CD4-positive, alpha-beta memory T cell (primary cell): ENCODE measurements at regions of chr2 and their contacts with region 1.

Region 1: GRCh38 chr2:96145036-96145847 is at the start of gene DUSP2:
- DNase-seq: peak; percentile 86 to 92 (median 87)
- H3K4me3 ChIP-seq: peak within 1 kb of the TSS; percentile 71 to 86
- H3K4me3 Mint-ChIP-seq: peak within 1 kb of the TSS; percentile 93 to 96 (median 94)
- H3K27ac ChIP-seq: peak within 1 kb of the TSS; percentile 100
- H3K27ac Mint-ChIP-seq: peak within 1 kb of the TSS; percentile 98 to 100 (median 99)
- H3K4me1 ChIP-seq: peaks cover 62% of the 10 kb centered on the region
- H3K4me1 Mint-ChIP-seq: peaks cover 33 to 79% (median 57%) of the 10 kb centered on the region in 4 donors
- H3K27me3 ChIP-seq: no peaks in the 10 kb centered on the region
- H3K27me3 Mint-ChIP-seq: no peaks in the 10 kb centered on the region
- total RNA-seq, gene DUSP2: 33.4 to 34.6 TPM

Region 2: GRCh38 chr2:96157651-96158553 is 12.7 kb after region 1 on chr2:
- CTCF ChIA-PET with region 1: interaction called, 43 read pairs
- POLR2A ChIA-PET with region 1: interaction called, 285 read pairs
- intact Hi-C with region 1: no loop called
- DNase-seq: peak; percentile 48 to 84 (median 58)
- H3K4me3 ChIP-seq: peak overlapping the region; percentile 4 to 9
- H3K4me3 Mint-ChIP-seq: peak overlapping the region; percentile 21 to 91 (median 68)
- H3K27ac ChIP-seq: peak overlapping the region; percentile 38
- H3K27ac Mint-ChIP-seq: peak overlapping the region; percentile 77 to 94 (median 88)
- H3K4me1 ChIP-seq: peaks cover 58% of the 10 kb centered on the region
- H3K4me1 Mint-ChIP-seq: peaks cover 42 to 78% (median 58%) of the 10 kb centered on the region in 4 donors
- H3K27me3 ChIP-seq: no peaks in the 10 kb centered on the region
- H3K27me3 Mint-ChIP-seq: no peaks in the 10 kb centered on the region

Region 3: GRCh38 chr2:96164459-96165184 is 19.4 kb after region 1 on chr2:
- CTCF ChIA-PET with region 1: interaction called, 648 read pairs
- POLR2A ChIA-PET with region 1: interaction called, 285 read pairs
- intact Hi-C with region 1: loop called (anchors 1 kb)
- DNase-seq: peak; percentile 57 to 74 (median 61)
- H3K4me3 ChIP-seq: peak overlapping the region; percentile 20 to 36
- H3K4me3 Mint-ChIP-seq: peak overlapping the region; percentile 48 to 86 (median 70)
- H3K27ac ChIP-seq: peak overlapping the region; percentile 58
- H3K27ac Mint-ChIP-seq: peak overlapping the region; percentile 93 to 98 (median 95)
- H3K4me1 ChIP-seq: peaks cover 42% of the 10 kb centered on the region
- H3K4me1 Mint-ChIP-seq: peaks cover 30 to 55% (median 43%) of the 10 kb centered on the region in 4 donors
- H3K27me3 ChIP-seq: no peaks in the 10 kb centered on the region
- H3K27me3 Mint-ChIP-seq: no peaks in the 10 kb centered on the region

Region 4: DNA sequence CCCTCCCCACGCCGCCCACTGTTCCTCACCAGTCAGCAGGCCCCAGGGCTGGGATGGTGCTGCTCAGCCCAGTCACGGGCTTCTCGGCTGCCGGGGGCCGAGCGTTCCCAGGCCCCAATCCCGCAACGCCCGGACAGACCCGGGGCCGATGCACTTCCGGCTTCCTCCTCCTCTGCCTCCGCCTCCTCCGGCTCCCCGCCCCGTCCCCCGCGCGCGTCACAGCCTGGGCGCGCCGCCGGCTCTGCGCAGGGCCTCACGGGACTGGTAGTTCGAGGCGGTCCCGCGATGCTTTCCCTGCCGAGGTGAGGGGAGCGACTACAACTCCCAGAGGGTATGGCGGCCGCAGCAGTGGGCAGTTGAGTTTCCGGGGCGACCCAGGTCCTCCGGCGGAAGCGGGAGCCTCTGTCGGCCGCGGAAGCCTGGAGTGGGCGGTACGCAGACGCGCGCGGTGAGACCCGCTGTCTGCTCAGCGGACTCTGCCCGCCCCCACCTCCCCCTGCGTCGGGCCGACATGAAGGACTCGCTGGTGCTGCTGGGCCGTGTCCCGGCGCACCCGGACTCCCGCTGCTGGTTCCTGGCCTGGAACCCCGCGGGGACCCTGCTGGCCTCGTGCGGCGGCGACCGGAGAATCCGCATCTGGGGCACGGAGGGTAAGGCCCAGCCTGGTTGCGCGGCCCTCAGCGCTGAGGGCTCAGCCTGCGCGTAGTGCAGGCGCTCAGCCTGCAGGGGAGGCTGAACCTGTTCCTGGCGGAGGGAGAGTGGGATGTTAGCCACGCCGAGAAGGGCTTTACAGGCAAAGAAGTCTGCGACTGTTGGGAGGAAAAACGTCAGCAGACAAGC is 120.8 kb after region 1 on chr2 and contains the starts of genes CIAO1 and TMEM127:
- CTCF ChIA-PET with region 1: interaction called, 4 read pairs
- POLR2A ChIA-PET with region 1: interaction called, 3 read pairs
- intact Hi-C with region 1: loop called (anchors 1 kb)
- DNase-seq: peak; percentile 97 to 98 (median 97)
- H3K4me3 ChIP-seq: peak within 1 kb of the TSS; percentile 85 to 97
- H3K4me3 Mint-ChIP-seq: peak within 1 kb of the TSS; percentile 91 to 99 (median 94)
- H3K27ac ChIP-seq: peak within 1 kb of the TSS; percentile 94
- H3K27ac Mint-ChIP-seq: peak within 1 kb of the TSS; percentile 80 to 99 (median 94)
- H3K4me1 ChIP-seq: peaks cover 49% of the 10 kb centered on the region
- H3K4me1 Mint-ChIP-seq: peaks cover 22 to 64% (median 48%) of the 10 kb centered on the region in 4 donors
- H3K27me3 ChIP-seq: no peaks in the 10 kb centered on the region
- H3K27me3 Mint-ChIP-seq: no peaks in the 10 kb centered on the region
- total RNA-seq, gene CIAO1: 78.3 to 87.3 TPM
- total RNA-seq, gene TMEM127: 45.1 to 45.6 TPM

Region 5: GRCh38 chr2:96276787-96277499 is 131.7 kb after region 1 on chr2:
- CTCF ChIA-PET with region 1: no interaction called
- POLR2A ChIA-PET with region 1: no interaction called
- intact Hi-C with region 1: no loop called
- DNase-seq: no peak
- H3K4me3 ChIP-seq: no peak overlapping the region
- H3K4me3 Mint-ChIP-seq: no peak overlapping the region
- H3K27ac ChIP-seq: no peak overlapping the region
- H3K27ac Mint-ChIP-seq: peak overlapping the region in 2 of 7 donors; percentile 22 to 29
- H3K4me1 ChIP-seq: no peaks in the 10 kb centered on the region
- H3K4me1 Mint-ChIP-seq: no peaks in the 10 kb centered on the region
- H3K27me3 ChIP-seq: no peaks in the 10 kb centered on the region
- H3K27me3 Mint-ChIP-seq: no peaks in the 10 kb centered on the region